ENCODE measurements at regions of chr7 and their contacts with region 1.

Region 1: GRCh38 chr7:22001345-22002004 is 55.8 kb upstream of the CDCA7L start:
- DNase-seq: peak in 7 of 9 donors; percentile 14 to 69 (median 61)
- ATAC-seq: peak; percentile 81
- H3K4me3 ChIP-seq: no peak overlapping the region
- H3K4me3 Mint-ChIP-seq: peak overlapping the region in 7 of 10 donors; percentile 37 to 75 (median 61)
- H3K27ac ChIP-seq: no peak overlapping the region
- H3K27ac Mint-ChIP-seq: peak overlapping the region in 2 of 9 donors; percentile 26 to 53
- H3K4me1 ChIP-seq: no peaks in the 10 kb centered on the region
- H3K4me1 Mint-ChIP-seq: peaks cover 0 to 7% (median 2%) of the 10 kb centered on the region in 7 donors
- H3K27me3 ChIP-seq: no peaks in the 10 kb centered on the region
- H3K27me3 Mint-ChIP-seq: peaks cover 0 to 15% (median 9%) of the 10 kb centered on the region in 5 donors

Region 2: GRCh38 chr7:20786779-20787659 is 1214.5 kb before region 1 on chr7 and contains the start of gene SP8:
- CTCF ChIA-PET with region 1: no interaction called
- POLR2A ChIA-PET with region 1: no interaction called
- intact Hi-C with region 1: loop called in 1 of 2 experiments (anchors 10 kb)
- DNase-seq: peak in 1 of 9 donors; percentile 12
- ATAC-seq: peak; percentile 10
- H3K4me3 ChIP-seq: no peak within 1 kb of the TSS
- H3K4me3 Mint-ChIP-seq: peak within 1 kb of the TSS; percentile 69 to 86 (median 80)
- H3K27ac ChIP-seq: no peak within 1 kb of the TSS
- H3K27ac Mint-ChIP-seq: peak within 1 kb of the TSS in 5 of 9 donors; percentile 19 to 81 (median 53)
- H3K4me1 ChIP-seq: no peaks in the 10 kb centered on the region
- H3K4me1 Mint-ChIP-seq: peaks cover 17 to 36% (median 26%) of the 10 kb centered on the region in 7 donors
- H3K27me3 ChIP-seq: peaks cover 0 to 47% of the 10 kb centered on the region in 2 donors
- H3K27me3 Mint-ChIP-seq: peaks cover 75 to 86% (median 81%) of the 10 kb centered on the region in 5 donors
- total RNA-seq, gene SP8: not detected

Region 3: GRCh38 chr7:21261627-21262594 is 739.6 kb before region 1 on chr7:
- CTCF ChIA-PET with region 1: interaction called, 4 read pairs
- POLR2A ChIA-PET with region 1: no interaction called
- intact Hi-C with region 1: loop called in 1 of 2 experiments (anchors 1 kb)
- DNase-seq: peak in 7 of 9 donors; percentile 20 to 45 (median 27)
- ATAC-seq: peak; percentile 74
- H3K4me3 ChIP-seq: no peak overlapping the region
- H3K4me3 Mint-ChIP-seq: peak overlapping the region in 1 of 10 donors; percentile 49
- H3K27ac ChIP-seq: no peak overlapping the region
- H3K27ac Mint-ChIP-seq: peak overlapping the region in 2 of 9 donors; percentile 60 to 63
- H3K4me1 ChIP-seq: peaks cover 0 to 2% of the 10 kb centered on the region in 2 donors
- H3K4me1 Mint-ChIP-seq: peaks cover 0 to 21% (median 9%) of the 10 kb centered on the region in 7 donors
- H3K27me3 ChIP-seq: no peaks in the 10 kb centered on the region
- H3K27me3 Mint-ChIP-seq: peaks cover 3 to 10% (median 6%) of the 10 kb centered on the region in 5 donors

Region 4: GRCh38 chr7:21526007-21526406 is 475.5 kb before region 1 on chr7:
- CTCF ChIA-PET with region 1: no interaction called
- POLR2A ChIA-PET with region 1: no interaction called
- intact Hi-C with region 1: loop called in 1 of 2 experiments (anchors 5 kb)
- DNase-seq: peak in 2 of 9 donors; percentile 14 to 24
- ATAC-seq: no peak
- H3K4me3 ChIP-seq: no peak overlapping the region
- H3K4me3 Mint-ChIP-seq: no peak overlapping the region
- H3K27ac ChIP-seq: no peak overlapping the region
- H3K27ac Mint-ChIP-seq: no peak overlapping the region
- H3K4me1 ChIP-seq: no peaks in the 10 kb centered on the region
- H3K4me1 Mint-ChIP-seq: peaks cover 0 to 3% (median 0%) of the 10 kb centered on the region in 7 donors
- H3K27me3 ChIP-seq: no peaks in the 10 kb centered on the region
- H3K27me3 Mint-ChIP-seq: peaks cover 0 to 18% (median 0%) of the 10 kb centered on the region in 5 donors

Region 5: GRCh38 chr7:21767300-21767900 is 234.1 kb before region 1 on chr7:
- CTCF ChIA-PET with region 1: no interaction called
- POLR2A ChIA-PET with region 1: no interaction called
- intact Hi-C with region 1: loop called (anchors 5 to 10 kb)
- DNase-seq: peak in 2 of 9 donors; percentile 0 to 26
- ATAC-seq: no peak
- H3K4me3 ChIP-seq: no peak overlapping the region
- H3K4me3 Mint-ChIP-seq: no peak overlapping the region
- H3K27ac ChIP-seq: no peak overlapping the region
- H3K27ac Mint-ChIP-seq: no peak overlapping the region
- H3K4me1 ChIP-seq: no peaks in the 10 kb centered on the region
- H3K4me1 Mint-ChIP-seq: peaks cover 0 to 14% (median 0%) of the 10 kb centered on the region in 7 donors
- H3K27me3 ChIP-seq: no peaks in the 10 kb centered on the region
- H3K27me3 Mint-ChIP-seq: peaks cover 0 to 15% (median 0%) of the 10 kb centered on the region in 5 donors

Region 6: DNA sequence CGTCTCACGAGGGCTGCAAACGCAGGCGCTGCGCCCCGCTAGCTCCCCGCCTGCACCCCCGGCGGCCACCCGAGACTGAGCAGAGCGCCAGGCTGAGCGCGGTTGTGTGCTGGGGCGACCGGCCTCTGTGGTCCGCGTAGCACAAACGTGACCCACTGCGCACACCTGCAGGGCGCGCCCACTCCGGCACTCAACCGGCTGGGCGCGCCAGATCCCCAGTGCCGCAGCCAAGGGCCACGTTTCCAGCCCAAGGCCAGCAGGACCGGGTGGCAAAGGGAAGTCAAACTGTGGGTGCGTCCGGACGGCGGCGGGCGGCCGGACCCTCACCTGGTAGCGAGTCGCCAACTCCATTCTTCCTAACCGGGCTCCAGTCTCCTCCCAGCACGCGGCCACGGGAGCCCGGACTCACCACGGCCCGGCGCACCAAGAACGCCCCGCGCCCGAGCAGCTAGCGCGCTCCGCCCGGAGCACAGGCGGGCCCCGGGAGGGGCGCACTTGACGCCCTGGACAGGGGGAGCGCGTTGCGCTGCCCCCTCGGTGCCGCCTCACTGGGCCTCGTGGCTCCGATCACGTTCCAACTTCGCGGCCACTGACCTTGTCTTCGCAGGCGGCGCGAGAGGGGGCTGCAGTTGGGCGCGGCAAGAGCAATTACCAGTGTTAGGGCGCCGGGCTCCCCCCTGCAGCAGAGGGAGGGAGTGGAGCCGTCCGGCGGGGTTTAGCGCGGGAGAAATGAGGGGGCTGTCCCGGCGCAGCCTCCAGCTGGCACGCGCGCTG is 55.8 kb before region 1 on chr7 and contains the start of gene CDCA7L:
- CTCF ChIA-PET with region 1: no interaction called
- POLR2A ChIA-PET with region 1: no interaction called
- intact Hi-C with region 1: loop called in 1 of 2 experiments (anchors 1 kb)
- DNase-seq: peak; percentile 40 to 77 (median 66)
- ATAC-seq: peak; percentile 85
- H3K4me3 ChIP-seq: peak within 1 kb of the TSS; percentile 57
- H3K4me3 Mint-ChIP-seq: peak within 1 kb of the TSS; percentile 86 to 95 (median 92)
- H3K27ac ChIP-seq: peak within 1 kb of the TSS; percentile 56
- H3K27ac Mint-ChIP-seq: peak within 1 kb of the TSS; percentile 60 to 87 (median 75)
- H3K4me1 ChIP-seq: peaks cover 0 to 33% of the 10 kb centered on the region in 2 donors
- H3K4me1 Mint-ChIP-seq: peaks cover 29 to 80% (median 62%) of the 10 kb centered on the region in 7 donors
- H3K27me3 ChIP-seq: no peaks in the 10 kb centered on the region
- H3K27me3 Mint-ChIP-seq: peaks cover 0 to 20% (median 0%) of the 10 kb centered on the region in 5 donors
- total RNA-seq, gene CDCA7L: 24.3 to 47.0 (median 41.0) TPM

Region 7: GRCh38 chr7:21960922-21961321 is 40.6 kb before region 1 on chr7:
- CTCF ChIA-PET with region 1: no interaction called
- POLR2A ChIA-PET with region 1: no interaction called
- intact Hi-C with region 1: no loop called
- DNase-seq: no peak
- ATAC-seq: no peak
- H3K4me3 ChIP-seq: no peak overlapping the region
- H3K4me3 Mint-ChIP-seq: no peak overlapping the region
- H3K27ac ChIP-seq: no peak overlapping the region
- H3K27ac Mint-ChIP-seq: no peak overlapping the region
- H3K4me1 ChIP-seq: no peaks in the 10 kb centered on the region
- H3K4me1 Mint-ChIP-seq: peaks cover 0 to 4% (median 0%) of the 10 kb centered on the region in 7 donors
- H3K27me3 ChIP-seq: no peaks in the 10 kb centered on the region
- H3K27me3 Mint-ChIP-seq: peaks cover 0 to 9% (median 0%) of the 10 kb centered on the region in 5 donors

Region 8: GRCh38 chr7:22339725-22340390 is 338.4 kb after region 1 on chr7:
- CTCF ChIA-PET with region 1: no interaction called
- POLR2A ChIA-PET with region 1: no interaction called
- intact Hi-C with region 1: no loop called
- DNase-seq: no peak
- ATAC-seq: no peak
- H3K4me3 ChIP-seq: no peak overlapping the region
- H3K4me3 Mint-ChIP-seq: no peak overlapping the region
- H3K27ac ChIP-seq: no peak overlapping the region
- H3K27ac Mint-ChIP-seq: no peak overlapping the region
- H3K4me1 ChIP-seq: no peaks in the 10 kb centered on the region
- H3K4me1 Mint-ChIP-seq: no peaks in the 10 kb centered on the region
- H3K27me3 ChIP-seq: no peaks in the 10 kb centered on the region
- H3K27me3 Mint-ChIP-seq: peaks cover 4 to 45% (median 6%) of the 10 kb centered on the region in 5 donors